Naive thymus-derived CD4-positive, alpha-beta T cell (primary cell): ENCODE measurements at regions of chr10 and their contacts with region 1.

Region 1: DNA sequence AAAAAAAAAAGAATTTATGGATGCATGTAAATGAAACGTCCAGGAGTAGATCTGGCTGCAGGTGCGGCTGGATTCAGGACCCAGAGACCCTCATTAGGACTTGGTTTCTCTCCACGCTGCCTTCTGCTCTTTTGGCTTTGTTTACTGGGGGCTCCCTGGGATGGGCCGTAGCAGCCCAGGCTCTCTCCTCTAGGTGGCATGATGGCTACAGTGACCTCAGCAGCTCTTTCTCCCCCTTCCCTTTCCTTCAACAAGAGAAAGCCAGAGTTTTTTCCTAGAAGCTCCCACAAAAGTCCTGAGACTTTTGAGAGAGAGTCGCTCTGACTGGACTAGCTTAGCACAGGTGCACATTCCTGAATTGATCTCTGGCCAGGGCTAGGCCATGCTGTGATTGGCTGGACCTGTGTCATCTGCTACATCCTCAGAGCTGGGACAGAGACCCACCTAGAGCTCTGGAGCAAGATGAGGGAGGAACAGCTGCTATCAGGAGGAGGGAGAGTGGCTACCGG is 67.8 kb upstream of the PDCD4 start:
- DNase-seq: peak in 2 of 9 donors; percentile 25 to 36
- ATAC-seq: peak; percentile 67
- H3K4me3 ChIP-seq: peak overlapping the region; percentile 29
- H3K4me3 Mint-ChIP-seq: peak overlapping the region in 9 of 10 donors; percentile 12 to 78 (median 69)
- H3K27ac ChIP-seq: peak overlapping the region; percentile 61
- H3K27ac Mint-ChIP-seq: peak overlapping the region; percentile 58 to 100 (median 93)
- H3K4me1 ChIP-seq: peaks cover 25 to 34% of the 10 kb centered on the region in 2 donors
- H3K4me1 Mint-ChIP-seq: peaks cover 30 to 53% (median 47%) of the 10 kb centered on the region in 7 donors
- H3K27me3 ChIP-seq: no peaks in the 10 kb centered on the region
- H3K27me3 Mint-ChIP-seq: no peaks in the 10 kb centered on the region

Region 2: GRCh38 chr10:110783509-110784107 is 20.3 kb before region 1 on chr10:
- CTCF ChIA-PET with region 1: interaction called, 7 read pairs
- POLR2A ChIA-PET with region 1: interaction called, 12 read pairs
- intact Hi-C with region 1: loop called (anchors 1 to 2 kb)
- DNase-seq: peak; percentile 36 to 92 (median 88)
- ATAC-seq: peak; percentile 94
- H3K4me3 ChIP-seq: no peak overlapping the region
- H3K4me3 Mint-ChIP-seq: peak overlapping the region; percentile 5 to 69 (median 50)
- H3K27ac ChIP-seq: peak overlapping the region; percentile 70
- H3K27ac Mint-ChIP-seq: peak overlapping the region; percentile 68 to 97 (median 93)
- H3K4me1 ChIP-seq: peaks cover 4 to 21% of the 10 kb centered on the region in 2 donors
- H3K4me1 Mint-ChIP-seq: peaks cover 1 to 72% (median 44%) of the 10 kb centered on the region in 7 donors
- H3K27me3 ChIP-seq: no peaks in the 10 kb centered on the region
- H3K27me3 Mint-ChIP-seq: no peaks in the 10 kb centered on the region

Region 3: GRCh38 chr10:110834629-110835301 is 30.9 kb after region 1 on chr10:
- CTCF ChIA-PET with region 1: interaction called, 6 read pairs
- POLR2A ChIA-PET with region 1: interaction called, 13 read pairs
- intact Hi-C with region 1: loop called in 1 of 2 experiments (anchors 2 kb)
- DNase-seq: peak in 7 of 9 donors; percentile 51 to 77 (median 69)
- ATAC-seq: peak; percentile 81
- H3K4me3 ChIP-seq: no peak overlapping the region
- H3K4me3 Mint-ChIP-seq: peak overlapping the region in 9 of 10 donors; percentile 13 to 84 (median 63)
- H3K27ac ChIP-seq: peak overlapping the region; percentile 66
- H3K27ac Mint-ChIP-seq: peak overlapping the region; percentile 82 to 98 (median 97)
- H3K4me1 ChIP-seq: peaks cover 0 to 39% of the 10 kb centered on the region in 2 donors
- H3K4me1 Mint-ChIP-seq: peaks cover 18 to 67% (median 45%) of the 10 kb centered on the region in 7 donors
- H3K27me3 ChIP-seq: no peaks in the 10 kb centered on the region
- H3K27me3 Mint-ChIP-seq: no peaks in the 10 kb centered on the region

Region 4: GRCh38 chr10:110857265-110858158 is 53.6 kb after region 1 on chr10:
- CTCF ChIA-PET with region 1: interaction called, 22 read pairs
- POLR2A ChIA-PET with region 1: interaction called, 44 read pairs
- intact Hi-C with region 1: no loop called
- DNase-seq: no peak
- ATAC-seq: peak; percentile 19
- H3K4me3 ChIP-seq: no peak overlapping the region
- H3K4me3 Mint-ChIP-seq: peak overlapping the region in 9 of 10 donors; percentile 29 to 79 (median 65)
- H3K27ac ChIP-seq: peak overlapping the region; percentile 83
- H3K27ac Mint-ChIP-seq: peak overlapping the region; percentile 67 to 100 (median 97)
- H3K4me1 ChIP-seq: peaks cover 81 to 89% of the 10 kb centered on the region in 2 donors
- H3K4me1 Mint-ChIP-seq: peaks cover 54 to 92% (median 88%) of the 10 kb centered on the region in 7 donors
- H3K27me3 ChIP-seq: no peaks in the 10 kb centered on the region
- H3K27me3 Mint-ChIP-seq: no peaks in the 10 kb centered on the region

Region 5: DNA sequence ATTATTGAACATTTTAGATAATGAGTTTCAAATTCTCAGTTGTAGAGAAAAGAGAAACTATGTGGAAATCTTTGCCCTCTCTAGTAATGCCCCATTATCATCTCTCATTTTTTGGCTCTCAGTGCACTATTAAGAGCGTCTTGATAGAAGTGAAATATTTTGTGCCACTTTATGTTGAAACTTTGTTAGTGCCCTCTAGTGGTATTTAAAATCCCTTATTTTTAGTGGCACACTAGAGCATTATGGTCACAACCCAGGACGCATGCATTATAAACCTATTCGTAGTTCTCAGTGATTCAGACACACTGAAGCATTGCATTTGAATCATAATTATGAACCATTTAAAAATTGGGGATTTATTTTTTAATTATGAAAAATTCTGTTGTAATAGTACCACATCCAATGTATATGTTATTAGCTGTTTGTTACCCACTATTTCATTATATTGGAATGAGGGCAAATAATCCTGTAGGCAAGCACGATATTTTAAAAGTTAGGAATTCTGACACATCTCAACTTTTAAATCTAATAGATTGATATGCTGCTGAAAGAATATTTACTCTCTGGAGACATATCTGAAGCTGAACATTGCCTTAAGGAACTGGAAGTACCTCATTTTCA is 89.8 kb after region 1 on chr10:
- CTCF ChIA-PET with region 1: interaction called, 37 read pairs
- POLR2A ChIA-PET with region 1: interaction called, 10 read pairs
- intact Hi-C with region 1: loop called (anchors 1 to 5 kb)
- DNase-seq: peak in 6 of 9 donors; percentile 47 to 75 (median 66)
- ATAC-seq: peak; percentile 91
- H3K4me3 ChIP-seq: no peak overlapping the region
- H3K4me3 Mint-ChIP-seq: peak overlapping the region in 3 of 10 donors; percentile 2 to 34 (median 6)
- H3K27ac ChIP-seq: peak overlapping the region; percentile 56
- H3K27ac Mint-ChIP-seq: peak overlapping the region in 7 of 9 donors; percentile 2 to 68 (median 32)
- H3K4me1 ChIP-seq: peaks cover 0 to 20% of the 10 kb centered on the region in 2 donors
- H3K4me1 Mint-ChIP-seq: peaks cover 10 to 66% (median 51%) of the 10 kb centered on the region in 7 donors
- H3K27me3 ChIP-seq: no peaks in the 10 kb centered on the region
- H3K27me3 Mint-ChIP-seq: no peaks in the 10 kb centered on the region

Region 6: DNA sequence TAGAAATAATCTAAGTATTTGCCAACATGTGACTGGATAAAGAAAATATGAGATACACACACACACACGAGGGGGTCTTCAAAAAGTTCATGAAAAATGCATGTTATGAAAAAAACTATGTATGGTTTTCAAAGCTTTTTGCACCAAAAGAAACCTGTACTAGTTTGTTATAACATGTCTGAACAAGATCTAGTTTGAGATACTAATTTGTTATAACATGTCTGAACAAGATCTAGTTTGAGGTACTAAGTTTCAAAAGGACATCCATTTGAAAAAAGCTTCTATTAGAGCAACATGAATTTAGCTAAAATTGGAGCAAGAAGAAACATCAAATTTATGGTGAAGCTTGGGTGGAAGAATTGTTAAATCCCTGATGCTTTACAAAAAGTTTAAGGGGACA is 253.1 kb after region 1 on chr10:
- CTCF ChIA-PET with region 1: no interaction called
- POLR2A ChIA-PET with region 1: no interaction called
- intact Hi-C with region 1: no loop called
- DNase-seq: no peak
- ATAC-seq: no peak
- H3K4me3 ChIP-seq: no peak overlapping the region
- H3K4me3 Mint-ChIP-seq: no peak overlapping the region
- H3K27ac ChIP-seq: no peak overlapping the region
- H3K27ac Mint-ChIP-seq: no peak overlapping the region
- H3K4me1 ChIP-seq: no peaks in the 10 kb centered on the region
- H3K4me1 Mint-ChIP-seq: no peaks in the 10 kb centered on the region
- H3K27me3 ChIP-seq: peaks cover 0 to 3% of the 10 kb centered on the region in 2 donors
- H3K27me3 Mint-ChIP-seq: peaks cover 19 to 53% (median 33%) of the 10 kb centered on the region in 5 donors